GM13976 (cell line): ENCODE measurements at regions of chrX and their contacts with region 1.

Region 1: GRCh38 chrX:49922291-49923241 is at the start of gene CLCN5:
- DNase-seq: peak; percentile 91
- CTCF ChIP-seq: no peak

Region 2: DNA sequence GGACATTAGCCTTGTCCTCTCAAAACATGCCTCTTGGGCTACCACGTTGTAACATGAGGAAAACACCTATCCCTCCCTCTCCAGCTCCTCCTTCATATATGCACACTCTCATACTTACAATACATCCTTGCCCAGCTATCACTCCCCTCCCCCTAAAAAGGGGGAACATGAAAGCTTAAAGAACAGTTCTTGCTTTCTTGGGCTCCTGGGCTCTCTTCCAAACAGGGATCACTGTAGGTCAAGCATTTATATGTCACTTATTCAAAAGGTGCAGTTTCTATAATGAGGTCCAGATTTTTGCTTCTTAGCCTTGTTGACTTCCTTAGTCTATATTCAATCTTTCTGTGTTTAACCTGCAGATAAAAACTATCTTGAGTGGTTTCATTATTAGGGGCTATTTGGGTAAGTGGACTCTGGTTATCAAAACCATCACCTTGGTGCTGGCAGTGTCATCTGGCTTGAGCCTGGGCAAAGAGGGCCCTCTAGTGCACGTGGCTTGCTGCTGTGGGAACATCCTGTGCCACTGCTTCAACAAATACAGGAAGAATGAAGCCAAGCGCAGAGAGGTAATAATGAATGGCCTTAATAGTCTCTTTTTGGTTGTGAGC is 158.8 kb after region 1 on chrX:
- in situ Hi-C with region 1: loop called (anchors 25 kb)
- DNase-seq: no peak
- CTCF ChIP-seq: peak; percentile 68

Region 3: GRCh38 chrX:50407976-50408375 is 485.4 kb after region 1 on chrX:
- in situ Hi-C with region 1: no loop called
- DNase-seq: no peak
- CTCF ChIP-seq: no peak

Region 4: GRCh38 chrX:50579955-50580354 is 657.4 kb after region 1 on chrX:
- in situ Hi-C with region 1: loop called (anchors 25 kb)
- DNase-seq: peak; percentile 32
- CTCF ChIP-seq: peak; percentile 49